Spleen (tissue), 13 donors: ENCODE measurements at regions of chr19 and their contacts with region 1.

Region 1: DNA sequence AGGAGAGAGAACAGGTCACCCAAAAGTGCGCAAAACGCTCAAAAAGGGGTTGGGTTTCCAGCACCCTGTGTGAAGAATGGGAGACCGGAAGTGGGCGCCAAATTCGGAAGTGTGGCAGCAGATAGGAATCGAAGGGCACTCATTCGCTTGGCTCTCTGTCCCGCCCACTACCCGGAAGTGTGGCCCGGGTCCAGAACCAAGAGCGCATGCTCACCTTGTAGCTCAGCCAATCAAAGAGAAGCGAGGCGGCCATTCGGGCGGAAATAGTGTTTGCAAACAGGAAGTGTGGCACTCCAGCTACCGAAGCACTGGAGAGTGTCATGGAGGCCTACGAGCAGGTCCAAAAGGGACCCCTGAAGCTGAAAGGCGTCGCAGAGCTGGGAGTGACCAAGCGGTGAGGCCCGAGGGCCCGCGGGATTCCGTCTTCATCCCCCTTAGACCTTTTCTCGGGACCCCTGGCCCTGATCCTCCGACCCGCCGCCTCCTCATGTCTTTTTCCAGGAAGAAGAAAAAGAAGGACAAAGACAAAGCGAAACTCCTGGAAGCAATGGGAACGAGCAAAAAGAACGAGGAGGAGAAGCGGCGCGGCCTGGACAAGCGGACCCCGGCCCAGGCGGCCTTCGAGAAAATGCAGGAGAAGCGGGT is at the start of gene FAM32A:
- DNase-seq: peak; percentile 99
- H3K4me3 ChIP-seq: peak within 1 kb of the TSS; percentile 74 to 98 (median 92)
- H3K27ac ChIP-seq: peak within 1 kb of the TSS; percentile 76 to 94 (median 90)
- H3K4me1 ChIP-seq: peaks cover 10 to 80% (median 53%) of the 10 kb centered on the region in 6 donors
- H3K27me3 ChIP-seq: no peaks in the 10 kb centered on the region
- CTCF ChIP-seq: peak; percentile 16 to 71 (median 56)
- POLR2A ChIP-seq: peak in 2 of 3 donors; percentile 19 to 50
- total RNA-seq, gene FAM32A: 45.8 to 105 (median 69.1) TPM

Region 2: GRCh38 chr19:15629003-15629880 is 556.0 kb before region 1 on chr19:
- intact Hi-C with region 1: loop called (anchors 5 kb)
- DNase-seq: peak; percentile 97
- H3K4me3 ChIP-seq: peak overlapping the region in 1 of 8 donors; percentile 30
- H3K27ac ChIP-seq: peak overlapping the region in 1 of 8 donors; percentile 23
- H3K4me1 ChIP-seq: peaks cover 0 to 38% (median 9%) of the 10 kb centered on the region in 6 donors
- H3K27me3 ChIP-seq: peaks cover 0 to 29% (median 6%) of the 10 kb centered on the region in 7 donors
- CTCF ChIP-seq: peak; percentile 73 to 96 (median 94)
- POLR2A ChIP-seq: no peak

Region 3: DNA sequence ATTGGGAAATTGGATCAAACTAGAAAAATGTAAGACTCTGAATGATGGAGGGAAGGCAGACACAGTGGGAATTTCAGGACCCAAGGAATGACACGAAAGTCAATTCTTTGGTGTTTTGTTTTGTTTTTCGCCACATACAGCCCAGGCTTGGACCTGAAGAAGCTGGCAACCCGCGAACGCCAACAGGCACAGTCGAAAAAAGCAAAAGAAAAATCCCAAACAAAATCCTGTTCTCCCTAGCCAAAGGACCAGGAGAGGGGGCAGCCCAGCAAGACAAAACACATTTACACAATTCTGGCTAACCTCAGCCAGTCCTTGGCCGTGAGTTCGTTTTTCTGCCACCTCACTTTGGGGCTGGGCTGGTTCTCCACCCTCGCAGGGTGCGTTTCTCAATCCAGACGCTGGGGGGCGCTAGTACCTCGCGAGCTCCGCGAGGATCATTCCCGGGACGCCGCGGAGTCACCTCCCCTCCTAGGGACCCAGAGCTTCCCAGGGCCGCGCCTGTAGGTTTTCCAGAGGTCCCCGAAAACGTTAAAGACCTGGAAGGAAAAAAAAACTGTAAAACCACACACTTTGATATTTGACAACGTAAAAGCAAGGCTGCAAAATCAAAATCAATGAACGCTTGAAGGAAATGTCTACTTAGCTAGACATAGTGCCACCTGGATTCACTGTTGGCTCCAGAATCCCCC is 143.8 kb before region 1 on chr19:
- intact Hi-C with region 1: loop called (anchors 2 kb)
- DNase-seq: peak; percentile 94
- H3K4me3 ChIP-seq: peak overlapping the region in 2 of 8 donors; percentile 3 to 33
- H3K27ac ChIP-seq: no peak overlapping the region
- H3K4me1 ChIP-seq: peaks cover 7 to 18% (median 10%) of the 10 kb centered on the region in 6 donors
- H3K27me3 ChIP-seq: no peaks in the 10 kb centered on the region
- CTCF ChIP-seq: peak; percentile 91 to 98 (median 97)
- POLR2A ChIP-seq: no peak

Region 4: DNA sequence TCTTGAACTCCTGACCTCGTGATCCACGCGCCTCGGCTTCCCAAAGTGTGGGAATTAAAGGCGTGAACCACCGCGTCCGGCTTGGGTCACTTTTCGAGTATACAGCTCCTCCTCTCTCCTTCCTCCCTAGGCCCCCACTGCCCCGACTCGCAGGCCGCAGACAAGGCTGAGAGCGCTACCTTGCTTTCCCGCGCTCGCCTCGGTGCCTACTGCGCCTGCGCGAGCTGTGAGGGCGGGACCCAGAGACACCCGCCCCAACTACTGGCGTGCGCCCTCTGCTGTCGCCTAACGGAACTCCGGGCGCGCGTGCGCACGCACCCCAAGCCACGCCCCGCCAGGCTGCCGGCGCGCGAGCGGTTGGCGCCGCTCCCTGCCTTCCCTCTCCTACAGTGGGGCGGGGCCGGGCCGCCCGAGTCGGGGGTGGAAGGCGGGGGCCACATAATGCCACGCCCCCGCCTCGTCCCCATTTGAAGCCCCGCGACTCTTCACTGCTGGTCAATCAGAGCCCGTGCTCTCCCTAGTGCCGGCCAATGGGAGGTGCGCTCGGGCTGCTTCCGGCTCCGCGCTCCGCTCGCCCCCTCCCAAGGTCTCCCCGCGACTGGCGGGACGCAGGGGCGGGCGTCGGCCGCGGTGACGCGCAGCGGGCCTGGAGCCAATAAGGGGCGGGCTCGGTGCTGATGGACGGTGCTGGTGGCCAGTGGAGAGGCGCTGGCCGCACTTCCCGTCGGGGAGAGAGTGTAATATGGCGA is 73.9 kb before region 1 on chr19 and contains the start of gene RAB8A:
- intact Hi-C with region 1: loop called (anchors 10 kb)
- DNase-seq: peak; percentile 100
- H3K4me3 ChIP-seq: peak within 1 kb of the TSS; percentile 71 to 92 (median 82)
- H3K27ac ChIP-seq: peak within 1 kb of the TSS; percentile 77 to 97 (median 93)
- H3K4me1 ChIP-seq: peaks cover 32 to 58% (median 51%) of the 10 kb centered on the region in 6 donors
- H3K27me3 ChIP-seq: no peaks in the 10 kb centered on the region
- CTCF ChIP-seq: peak; percentile 99 to 100 (median 100)
- POLR2A ChIP-seq: no peak
- total RNA-seq, gene RAB8A: 71.9 to 104 (median 89.8) TPM